Head of caudate nucleus (tissue), 42 donors: ENCODE measurements at regions of chr12 and their contacts with region 1.

Region 1: DNA sequence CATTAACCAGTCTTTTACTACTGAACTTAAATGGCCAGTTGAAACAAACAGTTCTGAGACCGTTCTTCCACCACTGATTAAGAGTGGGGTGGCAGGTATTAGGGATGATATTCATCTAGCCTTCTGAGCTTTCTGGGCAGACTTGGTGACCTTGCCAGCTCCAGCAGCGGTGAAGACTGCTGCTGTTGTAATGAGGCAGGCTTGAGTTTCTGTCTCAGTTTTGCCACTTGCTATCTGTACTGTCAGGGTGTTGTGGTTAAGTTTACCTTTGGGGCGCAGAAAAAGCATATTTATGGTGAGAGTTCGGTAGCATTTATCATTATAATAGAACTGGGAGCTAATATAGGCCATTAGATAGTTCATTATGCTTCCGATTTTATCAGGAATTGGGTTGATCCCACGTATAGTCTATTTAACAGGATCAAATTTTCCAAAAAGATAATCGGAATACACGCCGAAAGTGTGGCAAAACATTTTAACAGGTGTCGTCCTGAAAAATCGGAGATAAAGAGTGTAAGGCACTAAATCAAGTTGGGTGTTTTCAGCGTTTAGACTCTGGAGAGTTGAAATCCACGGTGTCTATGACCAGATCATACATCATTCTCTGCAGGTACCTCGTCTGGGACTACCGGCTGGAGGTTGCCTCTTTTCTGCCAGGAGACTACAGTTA is 688 bp upstream of the NECAP1 start:
- DNase-seq: peak in 21 of 42 donors; percentile 12 to 58 (median 29)

Region 2: GRCh38 chr12:8038659-8039114 is 42.7 kb before region 1 on chr12:
- intact Hi-C with region 1: loop called (anchors 5 kb)
- DNase-seq: peak in 41 of 42 donors; percentile 41 to 92 (median 77)

Region 3: DNA sequence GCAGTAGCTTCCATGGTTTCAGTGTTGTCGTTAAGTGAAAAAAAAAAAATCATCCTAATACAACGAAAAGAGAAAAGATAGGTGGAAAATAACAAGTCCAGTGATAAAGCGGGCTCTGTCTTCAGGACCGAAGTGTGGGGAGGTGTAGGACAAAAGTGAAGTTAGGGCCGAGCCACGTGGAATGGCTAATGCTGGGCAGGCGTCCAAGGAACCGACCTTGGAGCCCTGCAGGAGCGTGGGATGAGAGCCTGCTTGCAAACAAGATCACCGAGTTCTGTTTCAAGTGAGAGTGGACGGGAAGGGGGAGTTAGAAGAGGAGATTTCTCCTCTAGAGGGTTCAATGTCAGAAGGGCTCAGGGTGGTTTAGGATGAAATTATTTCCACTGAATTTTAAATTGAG is 763.3 kb after region 1 on chr12:
- intact Hi-C with region 1: no loop called
- DNase-seq: peak in 31 of 42 donors; percentile 6 to 68 (median 38)